Activated CD4-positive, alpha-beta memory T cell treated with anti-CD3 and anti-CD28 coated beads for 36 hours (primary cell): ENCODE measurements at regions of chr16 and their contacts with region 1.

Region 1: GRCh38 chr16:30602616-30603277 is 7.4 kb downstream of the ZNF689 start:
- DNase-seq: no peak
- H3K4me3 Mint-ChIP-seq: no peak overlapping the region
- H3K27ac Mint-ChIP-seq: no peak overlapping the region
- H3K4me1 Mint-ChIP-seq: peaks cover 8% of the 10 kb centered on the region
- H3K27me3 Mint-ChIP-seq: no peaks in the 10 kb centered on the region

Region 2: GRCh38 chr16:30445408-30446202 is 157.1 kb before region 1 on chr16 and contains the start of gene SEPHS2:
- CTCF ChIA-PET with region 1: interaction called, 22 read pairs
- POLR2A ChIA-PET with region 1: no interaction called
- intact Hi-C with region 1: no loop called
- DNase-seq: peak; percentile 98
- H3K4me3 Mint-ChIP-seq: peak within 1 kb of the TSS; percentile 90
- H3K27ac Mint-ChIP-seq: peak within 1 kb of the TSS; percentile 91
- H3K4me1 Mint-ChIP-seq: peaks cover 37% of the 10 kb centered on the region
- H3K27me3 Mint-ChIP-seq: no peaks in the 10 kb centered on the region
- total RNA-seq, gene SEPHS2: 61.4 to 61.7 TPM

Region 3: GRCh38 chr16:30571695-30572600 is 30.8 kb before region 1 on chr16 and contains the start of gene ZNF688:
- CTCF ChIA-PET with region 1: interaction called, 17 read pairs
- POLR2A ChIA-PET with region 1: interaction called, 4 read pairs
- intact Hi-C with region 1: no loop called
- DNase-seq: peak; percentile 96
- H3K4me3 Mint-ChIP-seq: peak within 1 kb of the TSS; percentile 91
- H3K27ac Mint-ChIP-seq: peak within 1 kb of the TSS; percentile 92
- H3K4me1 Mint-ChIP-seq: peaks cover 48% of the 10 kb centered on the region
- H3K27me3 Mint-ChIP-seq: no peaks in the 10 kb centered on the region
- total RNA-seq, gene ZNF688: 9.2 to 9.3 TPM

Region 4: DNA sequence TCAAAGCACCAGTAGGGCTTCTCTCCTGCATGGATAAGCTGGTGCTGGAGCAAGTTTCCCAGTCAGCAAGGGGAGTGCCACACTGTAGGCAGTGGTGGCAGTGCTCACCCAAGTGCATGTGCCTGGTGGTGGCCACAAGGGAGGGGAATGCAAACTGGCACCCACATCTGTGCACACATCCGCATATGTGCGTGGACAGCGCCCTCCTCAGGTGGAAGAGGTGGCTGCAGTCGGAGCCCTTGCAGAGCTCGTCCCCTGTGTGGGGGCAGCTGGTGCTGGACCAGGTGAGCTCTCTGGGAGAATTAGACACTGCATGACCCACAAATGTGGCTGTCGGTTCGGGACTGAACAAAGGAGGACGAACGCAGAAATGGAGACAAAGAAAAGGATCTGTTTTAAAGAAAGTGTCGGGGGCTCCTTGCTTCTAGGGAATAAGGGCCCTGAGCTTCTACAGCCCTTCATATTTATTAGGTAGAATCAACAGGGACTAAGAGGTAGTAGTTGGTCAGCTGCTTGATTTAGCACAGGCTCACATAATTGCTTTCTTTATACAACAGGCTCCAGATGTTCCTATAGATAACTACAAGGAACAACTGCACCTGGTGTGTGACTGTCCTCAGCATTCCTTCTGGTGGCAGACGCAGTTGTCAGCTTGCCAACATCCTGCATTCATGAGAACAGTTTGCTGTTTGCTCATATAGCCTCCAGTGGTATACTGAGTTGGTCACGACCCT is 12.8 kb after region 1 on chr16:
- CTCF ChIA-PET with region 1: interaction called, 45 read pairs
- POLR2A ChIA-PET with region 1: interaction called, 4 read pairs
- intact Hi-C with region 1: no loop called
- DNase-seq: peak; percentile 91
- H3K4me3 Mint-ChIP-seq: no peak overlapping the region
- H3K27ac Mint-ChIP-seq: no peak overlapping the region
- H3K4me1 Mint-ChIP-seq: peaks cover 1% of the 10 kb centered on the region
- H3K27me3 Mint-ChIP-seq: no peaks in the 10 kb centered on the region